Pancreas (tissue), 10 donors: ENCODE measurements at regions of chrX and their contacts with region 1.

Region 1: GRCh38 chrX:84907324-84907968 is 96.2 kb upstream of the APOOL start:
- DNase-seq: no peak
- ATAC-seq: no peak
- H3K4me3 ChIP-seq: no peak overlapping the region
- H3K27ac ChIP-seq: no peak overlapping the region
- H3K4me1 ChIP-seq: no peaks in the 10 kb centered on the region
- H3K27me3 ChIP-seq: peaks cover 0 to 19% (median 0%) of the 10 kb centered on the region in 4 donors
- CTCF ChIP-seq: peak in 1 of 4 donors; percentile 14

Region 2: GRCh38 chrX:84729809-84730208 is 177.6 kb before region 1 on chrX:
- intact Hi-C with region 1: loop called in 1 of 3 experiments (anchors 10 kb)
- DNase-seq: peak in 2 of 6 donors; percentile 1 to 22
- ATAC-seq: peak; percentile 84 to 98 (median 96)
- H3K4me3 ChIP-seq: no peak overlapping the region
- H3K27ac ChIP-seq: no peak overlapping the region
- H3K4me1 ChIP-seq: no peaks in the 10 kb centered on the region
- H3K27me3 ChIP-seq: peaks cover 0 to 6% (median 0%) of the 10 kb centered on the region in 4 donors
- CTCF ChIP-seq: peak; percentile 44 to 81 (median 76)